Gastrocnemius medialis (tissue), 4 donors: ENCODE measurements at regions of chr10 and their contacts with region 1.

Region 1: DNA sequence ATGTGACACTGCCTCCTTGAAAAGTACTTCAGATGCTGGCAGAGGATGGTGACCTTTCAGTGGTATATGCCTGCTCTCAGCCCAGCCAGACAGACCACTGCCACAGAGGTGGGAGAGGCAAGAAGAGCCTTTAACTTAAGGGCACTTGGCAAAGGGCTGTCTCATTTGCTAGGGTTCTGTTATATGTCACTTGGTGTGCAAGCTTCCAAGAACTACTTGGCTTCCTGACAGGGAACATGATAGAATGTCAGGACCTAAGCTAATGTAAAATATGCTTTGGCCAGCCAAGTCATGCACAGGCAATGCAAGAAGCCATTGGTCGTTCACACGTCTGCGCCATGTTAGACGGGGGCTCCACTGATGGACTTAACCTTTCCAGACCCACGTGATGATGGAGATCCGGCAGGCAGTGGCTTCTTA is 54.7 kb downstream of the RBM20 start:
- DNase-seq: peak; percentile 66 to 80
- ATAC-seq: peak; percentile 50 to 60
- H3K4me3 ChIP-seq: peak overlapping the region in 1 of 4 donors; percentile 9
- H3K27ac ChIP-seq: peak overlapping the region; percentile 86 to 94 (median 88)
- H3K4me1 ChIP-seq: peaks cover 64 to 77% of the 10 kb centered on the region in 2 donors
- H3K27me3 ChIP-seq: no peaks in the 10 kb centered on the region
- CTCF ChIP-seq: no peak
- POLR2A ChIP-seq: no peak

Region 2: DNA sequence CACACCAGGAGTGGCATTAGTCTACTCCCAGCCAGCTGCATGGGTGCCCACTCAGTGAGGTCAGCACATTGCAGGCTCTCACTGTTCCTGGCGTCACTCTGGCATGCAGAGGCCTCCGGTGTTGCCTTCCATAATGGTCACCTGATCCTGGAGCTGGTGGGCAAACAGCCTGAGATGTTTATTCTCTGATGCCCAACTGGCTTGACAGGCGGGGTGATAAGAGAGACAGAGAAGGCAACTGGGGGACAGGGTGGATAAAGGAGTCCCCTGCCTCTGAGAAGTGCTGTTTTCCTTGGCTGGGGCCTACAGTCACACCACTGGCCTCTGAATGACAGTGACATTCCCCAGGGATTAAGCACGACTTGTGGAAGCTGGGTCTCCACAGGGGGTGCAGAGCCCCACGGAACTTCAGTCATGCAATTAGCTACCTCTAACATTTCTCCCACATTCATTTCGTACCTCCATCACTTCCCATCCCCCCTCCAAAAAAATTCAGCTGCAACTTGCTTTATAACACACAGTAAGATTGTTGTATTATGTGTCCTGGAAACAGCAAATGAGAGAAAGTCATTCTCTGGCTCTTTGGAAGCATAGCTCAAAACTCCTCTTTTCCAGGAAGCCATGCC is 61.7 kb before region 1 on chr10:
- in situ Hi-C with region 1: no loop called
- intact Hi-C with region 1: loop called (anchors 2 kb)
- DNase-seq: peak; percentile 54 to 93
- ATAC-seq: peak; percentile 55 to 77
- H3K4me3 ChIP-seq: no peak overlapping the region
- H3K27ac ChIP-seq: peak overlapping the region; percentile 83 to 91 (median 85)
- H3K4me1 ChIP-seq: peaks cover 36 to 55% of the 10 kb centered on the region in 2 donors
- H3K27me3 ChIP-seq: no peaks in the 10 kb centered on the region
- CTCF ChIP-seq: no peak
- POLR2A ChIP-seq: peak in 1 of 2 donors; percentile 7

Region 3: DNA sequence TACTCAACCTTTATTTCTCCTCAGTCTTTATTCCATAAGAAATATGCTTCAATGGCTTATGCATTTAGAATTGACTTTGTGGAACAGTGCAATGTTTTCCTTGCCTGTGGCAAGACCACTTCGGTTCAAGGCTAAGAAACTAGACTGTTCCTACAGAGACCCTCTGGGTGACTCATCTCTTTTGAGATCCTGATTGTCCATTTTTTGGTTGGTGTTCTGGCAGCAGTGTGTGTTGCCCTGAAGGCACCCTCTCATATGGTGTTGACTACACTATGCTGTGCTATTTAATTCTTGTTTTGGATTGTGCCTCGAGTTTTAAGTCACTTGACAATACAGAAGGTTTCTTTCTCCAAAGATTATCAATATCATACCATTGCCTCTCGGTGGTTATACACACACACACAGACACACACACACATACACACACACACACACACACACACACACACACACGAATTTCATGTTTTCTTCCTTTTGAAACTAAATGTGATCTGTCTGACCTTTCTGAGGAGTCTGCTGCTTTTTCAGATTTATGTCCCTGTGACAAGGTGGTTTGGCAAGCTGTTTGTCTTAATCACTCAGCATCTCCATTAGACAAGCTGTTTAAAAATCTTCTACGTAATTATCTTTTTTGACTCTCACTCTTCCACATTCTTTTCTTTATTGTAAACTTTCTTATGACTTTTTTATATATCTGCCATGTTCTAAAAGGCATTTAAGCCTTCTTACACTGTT is 1935.5 kb after region 1 on chr10:
- in situ Hi-C with region 1: no loop called
- intact Hi-C with region 1: no loop called
- DNase-seq: no peak
- ATAC-seq: no peak
- H3K4me3 ChIP-seq: no peak overlapping the region
- H3K27ac ChIP-seq: no peak overlapping the region
- H3K4me1 ChIP-seq: no peaks in the 10 kb centered on the region
- H3K27me3 ChIP-seq: no peaks in the 10 kb centered on the region
- CTCF ChIP-seq: no peak
- POLR2A ChIP-seq: no peak